Heart right ventricle (tissue), 16 donors: ENCODE measurements at regions of chr18 and their contacts with region 1.

Region 1: DNA sequence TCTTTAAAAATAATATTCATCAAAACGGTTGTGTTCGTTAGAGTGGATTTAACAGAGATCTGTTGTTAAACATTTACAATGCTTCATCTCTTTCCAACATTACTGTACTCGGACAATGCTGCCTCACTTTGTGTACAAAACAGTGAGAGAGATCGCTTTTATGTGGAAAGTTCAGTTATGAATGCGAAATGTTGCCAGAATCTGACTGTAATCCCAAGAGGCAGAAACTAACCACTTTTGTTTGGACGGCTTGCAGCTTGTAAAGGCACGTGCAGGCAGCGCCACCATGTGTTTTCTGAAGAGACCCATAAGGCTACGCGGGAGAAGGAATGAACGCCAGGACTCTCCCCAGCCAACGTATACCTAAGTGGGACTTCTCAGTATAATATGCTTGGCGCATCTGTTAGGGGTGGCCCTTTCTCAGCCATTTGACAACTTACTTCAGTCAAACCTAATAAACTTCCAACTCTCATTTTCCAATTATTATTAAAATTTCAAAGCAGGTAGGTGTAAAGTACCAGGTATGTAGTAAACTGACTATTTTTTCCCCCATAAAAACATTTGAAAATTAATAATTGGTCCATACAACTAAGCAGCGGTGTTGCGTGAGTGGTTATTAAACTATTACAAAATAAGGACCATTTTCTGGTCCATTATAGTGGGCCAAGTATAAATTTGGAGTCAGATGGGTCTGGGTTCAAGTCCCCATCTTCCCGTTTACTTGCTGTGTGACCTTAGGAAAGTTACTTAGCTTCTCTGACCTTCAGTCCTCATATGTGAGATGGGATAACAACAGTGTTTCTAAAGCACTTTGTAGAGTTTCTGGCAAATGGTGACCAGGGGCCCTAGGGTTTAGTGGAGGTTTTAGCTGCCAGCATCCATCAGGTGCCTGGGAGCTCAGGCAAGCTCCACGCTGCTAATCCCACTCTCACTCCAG is 5.6 kb upstream of the NAPG start:
- DNase-seq: peak; percentile 78 to 88
- ATAC-seq: peak; percentile 79 to 93 (median 88)
- H3K4me3 ChIP-seq: no peak overlapping the region
- H3K27ac ChIP-seq: peak overlapping the region in 1 of 10 donors; percentile 36
- H3K4me1 ChIP-seq: peaks cover 4 to 31% (median 19%) of the 10 kb centered on the region in 9 donors
- H3K27me3 ChIP-seq: no peaks in the 10 kb centered on the region
- CTCF ChIP-seq: peak; percentile 69 to 92 (median 82)

Region 2: GRCh38 chr18:9827641-9828505 is 692.4 kb before region 1 on chr18:
- intact Hi-C with region 1: no loop called
- DNase-seq: no peak
- ATAC-seq: peak in 2 of 8 donors; percentile 23 to 35
- H3K4me3 ChIP-seq: no peak overlapping the region
- H3K27ac ChIP-seq: peak overlapping the region in 5 of 10 donors; percentile 42 to 91 (median 83)
- H3K4me1 ChIP-seq: peaks cover 0 to 78% (median 26%) of the 10 kb centered on the region in 9 donors
- H3K27me3 ChIP-seq: no peaks in the 10 kb centered on the region
- CTCF ChIP-seq: no peak

Region 3: DNA sequence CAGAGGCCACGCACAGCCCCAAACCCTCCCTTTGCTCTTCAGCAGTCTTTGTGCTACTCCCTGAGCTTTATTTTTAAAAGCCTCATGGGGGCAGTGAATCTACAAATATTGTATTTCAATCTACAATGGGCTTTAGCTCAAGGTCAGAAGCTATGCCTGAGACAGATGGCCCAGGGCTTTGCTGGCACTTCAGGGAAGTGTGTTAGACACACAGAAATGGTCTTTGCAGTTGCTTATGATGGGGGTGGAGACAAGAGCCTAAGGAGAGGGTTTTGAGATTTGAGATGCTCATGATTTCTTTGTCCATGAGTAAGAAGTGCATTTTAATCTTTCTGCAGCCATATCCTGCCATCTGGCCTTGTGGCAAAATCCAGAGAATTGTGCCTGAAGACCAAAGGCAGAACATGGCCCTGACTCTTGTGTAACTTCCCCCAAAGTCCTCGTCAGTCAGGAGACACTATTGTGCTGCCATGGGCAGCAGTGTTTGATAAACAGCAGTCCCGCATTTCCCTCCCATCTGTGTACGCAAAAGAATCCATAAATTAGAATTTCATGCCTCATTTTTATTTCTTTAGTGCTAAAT is 513.9 kb before region 1 on chr18:
- intact Hi-C with region 1: loop called in 7 of 10 experiments (anchors 1 to 10 kb)
- DNase-seq: no peak
- ATAC-seq: peak in 5 of 8 donors; percentile 27 to 49 (median 40)
- H3K4me3 ChIP-seq: no peak overlapping the region
- H3K27ac ChIP-seq: no peak overlapping the region
- H3K4me1 ChIP-seq: peaks cover 4 to 27% (median 17%) of the 10 kb centered on the region in 9 donors
- H3K27me3 ChIP-seq: no peaks in the 10 kb centered on the region
- CTCF ChIP-seq: peak in 7 of 9 donors; percentile 12 to 53 (median 43)

Region 4: GRCh38 chr18:10032331-10033015 is 487.8 kb before region 1 on chr18:
- intact Hi-C with region 1: loop called in 2 of 10 experiments (anchors 5 to 10 kb)
- DNase-seq: peak in 1 of 2 donors; percentile 45
- ATAC-seq: peak; percentile 68 to 87 (median 82)
- H3K4me3 ChIP-seq: peak overlapping the region in 9 of 10 donors; percentile 13 to 50 (median 38)
- H3K27ac ChIP-seq: peak overlapping the region in 6 of 10 donors; percentile 14 to 75 (median 54)
- H3K4me1 ChIP-seq: peaks cover 0 to 21% (median 13%) of the 10 kb centered on the region in 9 donors
- H3K27me3 ChIP-seq: no peaks in the 10 kb centered on the region
- CTCF ChIP-seq: peak; percentile 39 to 73 (median 60)

Region 5: DNA sequence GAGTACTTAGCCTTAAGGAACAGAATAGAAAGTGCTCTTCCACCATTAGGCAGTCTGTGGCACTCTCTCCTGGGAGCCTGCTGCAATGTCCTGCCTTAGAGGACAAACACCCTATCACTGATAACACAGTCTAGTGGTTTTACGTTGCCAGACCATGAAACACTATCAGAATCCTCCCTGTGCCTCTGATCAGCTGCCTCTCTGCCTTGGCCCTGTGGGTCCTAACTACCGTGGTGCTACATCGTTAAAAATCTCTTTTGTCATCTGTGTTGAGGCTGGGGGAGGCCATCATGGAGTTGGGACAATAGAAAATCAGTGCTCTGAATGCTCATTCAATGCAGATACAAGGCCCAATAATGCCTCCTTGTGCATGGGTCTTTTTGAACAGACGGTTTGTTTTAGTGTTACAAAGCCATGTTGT is 77.7 kb before region 1 on chr18:
- intact Hi-C with region 1: loop called in 1 of 10 experiments (anchors 5 kb)
- DNase-seq: no peak
- ATAC-seq: peak in 6 of 8 donors; percentile 59 to 81 (median 63)
- H3K4me3 ChIP-seq: no peak overlapping the region
- H3K27ac ChIP-seq: no peak overlapping the region
- H3K4me1 ChIP-seq: no peaks in the 10 kb centered on the region
- H3K27me3 ChIP-seq: no peaks in the 10 kb centered on the region
- CTCF ChIP-seq: peak in 5 of 9 donors; percentile 18 to 48 (median 38)

Region 6: GRCh38 chr18:10681581-10682367 is 161.5 kb after region 1 on chr18:
- intact Hi-C with region 1: no loop called
- DNase-seq: no peak
- ATAC-seq: no peak
- H3K4me3 ChIP-seq: no peak overlapping the region
- H3K27ac ChIP-seq: no peak overlapping the region
- H3K4me1 ChIP-seq: no peaks in the 10 kb centered on the region
- H3K27me3 ChIP-seq: peaks cover 0 to 4% (median 0%) of the 10 kb centered on the region in 7 donors
- CTCF ChIP-seq: no peak